ENCODE measurements at regions of chr2 and their contacts with region 1.

Region 1: DNA sequence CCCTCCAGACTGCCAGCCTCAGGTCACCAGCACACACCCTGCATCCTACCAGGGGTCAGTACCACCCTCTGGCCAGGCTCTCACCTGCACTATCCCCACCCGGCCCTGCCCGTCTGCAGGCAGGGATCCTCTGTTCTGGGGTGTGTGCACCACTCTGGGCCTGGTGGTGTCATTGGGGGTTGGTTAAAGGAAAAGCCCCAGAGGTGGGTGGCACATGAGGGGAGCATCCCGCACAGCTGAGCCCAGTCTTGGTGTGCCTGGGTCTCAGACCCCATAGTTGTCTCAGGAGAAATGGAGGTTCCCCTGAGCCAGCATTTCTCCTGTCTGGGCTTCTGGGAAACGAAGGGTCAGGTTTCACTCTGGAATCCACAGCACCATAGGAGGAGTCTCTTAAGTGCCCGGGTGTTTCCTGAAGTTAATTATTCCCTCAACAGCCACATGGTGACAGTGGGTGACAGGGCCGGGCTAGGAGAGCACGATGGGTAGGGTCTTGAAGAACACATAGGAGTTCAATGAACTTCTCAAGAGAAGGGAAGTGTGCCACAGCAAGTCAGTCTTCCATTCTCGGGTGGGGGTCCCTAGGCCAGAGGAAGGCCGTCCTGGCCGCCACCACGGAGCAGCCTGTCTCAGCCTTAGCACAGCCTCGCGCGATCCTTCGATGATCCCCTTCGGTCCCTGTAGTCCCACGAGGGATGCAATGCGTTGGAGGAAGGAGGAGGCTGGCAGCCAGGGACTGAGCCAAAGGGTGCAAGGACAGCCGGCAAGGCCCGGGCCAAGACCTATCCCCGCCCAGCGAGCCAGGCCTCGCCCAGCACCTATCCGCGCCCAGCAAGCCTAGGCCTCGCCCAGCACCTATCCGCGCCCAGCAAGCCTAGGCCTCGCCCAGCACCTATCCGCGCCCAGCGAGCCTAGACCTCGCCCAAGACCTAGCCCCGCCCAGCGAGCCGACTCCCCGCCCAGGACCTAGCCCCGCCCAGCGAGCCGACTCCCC is 1.1 kb upstream of the FARP2 start:
- DNase-seq: peak; percentile 70 to 91
- H3K4me3 ChIP-seq: peak overlapping the region; percentile 24 to 61 (median 59); a peak in 7 of 8 replicates
- H3K27ac ChIP-seq: peak overlapping the region; percentile 73
- H3K4me1 ChIP-seq: peaks cover 1 to 10% (median 7%) of the 10 kb centered on the region in 4 experiments; a peak in 6 of 7 replicates
- H3K27me3 ChIP-seq: no peaks in the 10 kb centered on the region
- CTCF ChIP-seq: no peak
- EP300 ChIP-seq: no peak
- POLR2A ChIP-seq: 0 out of 3 replicates have a peak, but pooled peaks of 1 of the 2 experiments have one; percentile 44
- RAD21 ChIP-seq: peak in 1 of 2 experiments; percentile 9; a peak in 1 of 4 replicates

Region 2: DNA sequence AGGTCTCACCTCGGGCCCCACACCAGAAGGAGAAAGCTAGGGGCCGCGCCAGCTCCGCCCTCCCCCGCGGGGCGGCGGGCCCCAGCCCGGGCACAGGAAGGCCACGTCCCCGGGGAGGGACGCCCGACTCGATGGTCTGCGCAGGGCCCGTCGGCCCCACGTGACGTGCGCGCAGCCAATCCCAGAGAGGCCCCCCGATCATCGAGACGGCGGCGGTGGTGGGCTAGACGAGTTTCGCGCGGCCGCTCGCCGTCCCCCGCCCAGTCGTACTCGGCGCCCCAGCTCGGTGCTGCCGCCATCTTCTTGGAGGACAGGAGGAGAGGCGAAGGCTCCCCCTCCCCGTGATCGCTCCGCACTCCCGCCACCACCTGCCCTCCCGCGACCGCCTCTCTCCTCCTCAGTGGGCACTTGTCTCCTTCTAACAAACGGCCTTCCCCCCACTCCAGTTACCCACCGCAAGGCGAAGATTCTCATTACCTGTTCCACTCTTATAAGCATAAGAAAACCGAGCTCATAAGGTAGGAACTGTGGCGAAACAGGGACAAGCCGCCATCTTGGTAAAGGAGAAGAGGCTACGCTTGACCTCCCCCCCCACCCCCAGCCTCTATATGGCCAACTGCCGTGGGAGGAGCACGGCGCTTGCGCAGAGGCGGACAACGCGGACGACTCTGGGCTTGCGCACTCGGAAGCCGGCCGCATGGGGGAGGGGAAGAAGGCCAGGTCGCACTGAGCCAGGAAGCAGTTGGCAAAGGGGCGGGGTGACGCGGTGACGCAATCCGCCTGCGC is 39.7 kb before region 1 on chr2 and contains the start of gene HDLBP:
- CTCF ChIA-PET with region 1: no interaction called
- POLR2A ChIA-PET with region 1: interaction called, 12 read pairs
- DNase-seq: peak; percentile 93 to 98
- H3K4me3 ChIP-seq: peak within 1 kb of the TSS; percentile 72 to 100 (median 97)
- H3K27ac ChIP-seq: peak within 1 kb of the TSS; percentile 100
- H3K4me1 ChIP-seq: peaks cover 0 to 6% (median 1%) of the 10 kb centered on the region in 4 experiments; a peak in 2 of 7 replicates
- H3K27me3 ChIP-seq: no peaks in the 10 kb centered on the region
- CTCF ChIP-seq: peak; percentile 23 to 72 (median 51); a peak in 3 of 4 replicates
- EP300 ChIP-seq: peak in 1 of 2 experiments; percentile 5; a peak in 1 of 3 replicates
- POLR2A ChIP-seq: peak; percentile 66 to 73
- RAD21 ChIP-seq: no peak
- total RNA-seq, gene HDLBP: 329 and 360 TPM in 2 replicates

Region 3: DNA sequence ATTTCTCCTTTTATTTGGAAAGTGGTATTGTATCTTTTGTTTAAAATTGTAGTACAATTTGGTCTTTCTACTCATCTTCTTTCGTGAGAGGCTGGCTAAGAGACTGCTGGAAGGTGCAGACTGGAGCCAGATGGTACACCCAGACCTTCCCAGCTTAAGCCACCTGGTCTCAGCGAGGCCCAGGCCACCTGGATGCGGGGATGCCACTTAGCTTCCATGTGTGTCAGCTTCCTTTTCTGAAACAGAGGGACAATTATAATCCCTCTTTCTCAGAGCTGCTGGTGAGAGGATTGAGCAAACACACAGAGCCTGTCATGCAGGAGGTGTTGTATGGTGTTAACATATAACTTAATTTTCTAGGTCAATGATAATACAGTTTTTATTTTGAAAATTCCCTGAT is 18.5 kb after region 1 on chr2:
- CTCF ChIA-PET with region 1: interaction called, 10 read pairs
- POLR2A ChIA-PET with region 1: interaction called, 10 read pairs
- DNase-seq: no peak
- H3K4me3 ChIP-seq: no peak overlapping the region
- H3K27ac ChIP-seq: no peak overlapping the region
- H3K4me1 ChIP-seq: peaks cover 0 to 2% (median under 1%) of the 10 kb centered on the region in 4 experiments; a peak in 1 of 7 replicates
- H3K27me3 ChIP-seq: no peaks in the 10 kb centered on the region
- CTCF ChIP-seq: no peak
- EP300 ChIP-seq: no peak
- POLR2A ChIP-seq: no peak
- RAD21 ChIP-seq: no peak

Region 4: DNA sequence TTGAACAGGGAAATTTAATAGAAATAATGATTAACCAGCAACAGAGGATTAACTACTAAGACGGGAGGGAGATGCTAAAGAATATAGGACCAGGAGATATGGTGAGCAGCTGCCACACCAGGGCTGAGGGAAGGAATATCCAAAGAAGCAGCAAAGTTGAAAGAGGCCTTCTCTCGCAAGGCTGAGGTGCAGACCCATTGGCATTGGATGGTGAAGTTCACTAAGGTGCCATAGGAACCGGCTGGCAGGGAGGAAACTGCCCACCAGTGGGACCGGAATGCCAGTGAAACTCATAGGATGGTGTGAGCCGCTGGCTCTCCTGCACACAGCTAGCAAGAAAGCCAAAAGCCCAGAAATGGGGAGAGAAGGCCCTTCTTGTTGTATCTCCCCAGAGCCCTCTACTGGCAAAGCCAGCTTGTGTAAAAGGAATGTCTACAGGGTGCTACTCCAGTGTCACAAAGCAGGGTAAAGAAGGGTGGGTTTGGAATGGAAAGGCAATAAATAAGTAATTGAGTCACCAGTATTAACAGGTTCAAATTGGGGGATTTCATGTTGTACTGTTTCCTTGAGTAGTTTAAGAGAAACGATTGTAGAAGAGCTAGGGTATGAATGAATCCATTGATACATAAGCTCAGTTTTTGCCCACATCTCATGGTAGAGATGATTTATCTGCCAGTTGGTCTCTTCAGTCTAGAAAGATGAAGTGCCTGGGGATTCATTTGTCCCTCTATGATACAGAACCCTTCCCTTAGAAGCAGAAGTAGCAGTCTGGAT is 37.1 kb after region 1 on chr2:
- CTCF ChIA-PET with region 1: interaction called, 15 read pairs
- POLR2A ChIA-PET with region 1: interaction called, 3 read pairs
- DNase-seq: peak in 1 of 2 experiments; percentile 56
- H3K4me3 ChIP-seq: no peak overlapping the region
- H3K27ac ChIP-seq: no peak overlapping the region
- H3K4me1 ChIP-seq: no peaks in the 10 kb centered on the region
- H3K27me3 ChIP-seq: no peaks in the 10 kb centered on the region
- CTCF ChIP-seq: peak; percentile 9 to 63 (median 45)
- EP300 ChIP-seq: no peak
- POLR2A ChIP-seq: no peak
- RAD21 ChIP-seq: peak; percentile 64 to 71

Region 5: DNA sequence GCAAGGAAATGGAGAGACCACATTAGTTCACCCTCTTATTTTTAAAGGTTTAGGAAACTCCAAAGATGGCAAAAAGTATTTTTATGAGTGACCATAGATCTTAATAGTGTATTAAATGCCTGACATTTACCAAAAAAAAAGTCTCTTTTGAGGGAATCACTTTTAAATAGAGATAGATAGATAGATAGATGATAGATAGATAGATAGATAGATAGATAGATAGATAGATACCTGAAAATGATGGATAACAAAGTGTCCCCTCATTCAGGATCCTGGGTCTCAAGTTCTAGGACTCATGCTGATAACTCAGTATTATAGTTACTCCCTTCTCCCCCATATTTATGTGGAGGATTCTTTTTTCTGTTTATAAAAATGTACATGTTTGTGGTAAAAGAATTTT is 53.9 kb after region 1 on chr2:
- CTCF ChIA-PET with region 1: no interaction called
- POLR2A ChIA-PET with region 1: no interaction called
- DNase-seq: no peak
- H3K4me3 ChIP-seq: no peak overlapping the region
- H3K27ac ChIP-seq: no peak overlapping the region
- H3K4me1 ChIP-seq: no peaks in the 10 kb centered on the region
- H3K27me3 ChIP-seq: no peaks in the 10 kb centered on the region
- CTCF ChIP-seq: no peak
- EP300 ChIP-seq: no peak
- POLR2A ChIP-seq: no peak
- RAD21 ChIP-seq: no peak